Adrenal gland (tissue), 19 donors: ENCODE measurements at regions of chr9 and their contacts with region 1.

Region 1: GRCh38 chr9:76297721-76298239 is 96.4 kb downstream of the RFK start:
- DNase-seq: peak in 4 of 7 donors; percentile 9 to 63 (median 22)
- H3K4me3 ChIP-seq: no peak overlapping the region
- H3K27ac ChIP-seq: peak overlapping the region in 2 of 5 donors; percentile 32 to 60
- H3K4me1 ChIP-seq: no peaks in the 10 kb centered on the region
- H3K27me3 ChIP-seq: no peaks in the 10 kb centered on the region
- CTCF ChIP-seq: no peak
- POLR2A ChIP-seq: no peak

Region 2: DNA sequence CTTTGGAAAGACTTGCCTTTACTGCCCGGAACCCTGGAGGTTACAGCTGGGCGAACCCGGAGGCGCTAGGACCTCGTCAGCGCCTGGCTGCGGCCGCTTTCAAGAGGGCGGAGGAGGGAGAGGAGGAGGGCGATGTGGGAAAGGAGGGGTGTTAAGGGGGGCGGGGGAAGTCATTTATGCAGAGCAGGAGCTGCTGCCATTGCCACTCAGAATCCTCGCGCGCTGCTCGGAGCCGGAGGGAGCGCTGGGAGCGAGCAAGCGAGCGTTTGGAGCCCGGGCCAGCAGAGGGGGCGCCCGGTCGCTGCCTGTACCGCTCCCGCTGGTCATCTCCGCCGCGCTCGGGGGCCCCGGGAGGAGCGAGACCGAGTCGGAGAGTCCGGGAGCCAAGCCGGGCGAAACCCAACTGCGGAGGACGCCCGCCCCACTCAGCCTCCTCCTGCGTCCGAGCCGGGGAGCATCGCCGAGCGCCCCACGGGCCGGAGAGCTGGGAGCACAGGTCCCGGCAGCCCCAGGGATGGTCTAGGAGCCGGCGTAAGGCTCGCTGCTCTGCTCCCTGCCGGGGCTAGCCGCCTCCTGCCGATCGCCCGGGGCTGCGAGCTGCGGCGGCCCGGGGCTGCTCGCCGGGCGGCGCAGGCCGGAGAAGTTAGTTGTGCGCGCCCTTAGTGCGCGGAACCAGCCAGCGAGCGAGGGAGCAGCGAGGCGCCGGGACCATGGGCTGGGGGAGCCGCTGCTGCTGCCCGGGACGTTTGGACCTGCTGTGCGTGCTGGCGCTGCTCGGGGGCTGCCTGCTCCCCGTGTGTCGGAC is 407.1 kb before region 1 on chr9 and contains the start of gene PCSK5:
- intact Hi-C with region 1: loop called in 1 of 2 experiments (anchors 10 kb)
- DNase-seq: peak; percentile 93 to 97 (median 94)
- H3K4me3 ChIP-seq: peak within 1 kb of the TSS; percentile 12 to 81 (median 54)
- H3K27ac ChIP-seq: peak within 1 kb of the TSS; percentile 70 to 92 (median 81)
- H3K4me1 ChIP-seq: peaks cover 8 to 19% of the 10 kb centered on the region in 2 donors
- H3K27me3 ChIP-seq: no peaks in the 10 kb centered on the region
- CTCF ChIP-seq: peak in 4 of 6 experiments; percentile 22 to 34 (median 30)
- POLR2A ChIP-seq: peak; percentile 85 to 92
- total RNA-seq, gene PCSK5: 4.8 to 31.8 (median 9.2) TPM

Region 3: GRCh38 chr9:76166526-76166925 is 131.3 kb before region 1 on chr9:
- intact Hi-C with region 1: no loop called
- DNase-seq: no peak
- H3K4me3 ChIP-seq: no peak overlapping the region
- H3K27ac ChIP-seq: no peak overlapping the region
- H3K4me1 ChIP-seq: peaks cover 4 to 8% of the 10 kb centered on the region in 2 donors
- H3K27me3 ChIP-seq: no peaks in the 10 kb centered on the region
- CTCF ChIP-seq: no peak
- POLR2A ChIP-seq: no peak